Pancreas (tissue), 10 donors: ENCODE measurements at regions of chr5 and their contacts with region 1.

Region 1: DNA sequence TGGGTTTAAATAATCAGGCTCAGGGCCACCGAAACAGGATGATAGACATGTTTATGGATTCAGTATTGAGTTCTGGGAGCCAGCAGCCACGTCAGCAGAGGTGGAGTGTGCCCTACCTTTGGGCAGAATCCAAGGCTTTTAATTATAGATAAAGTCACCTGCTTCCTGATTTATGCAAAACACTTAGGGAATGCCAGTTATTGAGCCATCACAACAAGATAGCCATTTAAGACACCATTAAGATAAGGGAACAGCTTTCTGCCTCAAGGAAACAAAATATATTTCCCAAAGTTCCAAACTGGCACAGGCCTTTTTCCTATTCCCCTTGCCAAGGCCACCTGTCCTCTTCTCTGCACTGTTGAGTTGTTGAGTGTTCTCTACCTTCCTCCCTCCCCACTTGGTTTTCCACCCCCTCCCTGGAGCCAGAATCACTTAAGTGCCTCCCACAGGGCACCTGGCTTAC is 2.4 kb downstream of the CCL28 start:
- DNase-seq: peak; percentile 60 to 90 (median 78)
- ATAC-seq: peak; percentile 86 to 91 (median 86)
- H3K4me3 ChIP-seq: peak overlapping the region in 1 of 4 donors; percentile 25
- H3K27ac ChIP-seq: peak overlapping the region; percentile 38 to 84 (median 68)
- H3K4me1 ChIP-seq: peaks cover 21 to 32% (median 22%) of the 10 kb centered on the region in 3 donors
- H3K27me3 ChIP-seq: no peaks in the 10 kb centered on the region
- CTCF ChIP-seq: no peak

Region 2: DNA sequence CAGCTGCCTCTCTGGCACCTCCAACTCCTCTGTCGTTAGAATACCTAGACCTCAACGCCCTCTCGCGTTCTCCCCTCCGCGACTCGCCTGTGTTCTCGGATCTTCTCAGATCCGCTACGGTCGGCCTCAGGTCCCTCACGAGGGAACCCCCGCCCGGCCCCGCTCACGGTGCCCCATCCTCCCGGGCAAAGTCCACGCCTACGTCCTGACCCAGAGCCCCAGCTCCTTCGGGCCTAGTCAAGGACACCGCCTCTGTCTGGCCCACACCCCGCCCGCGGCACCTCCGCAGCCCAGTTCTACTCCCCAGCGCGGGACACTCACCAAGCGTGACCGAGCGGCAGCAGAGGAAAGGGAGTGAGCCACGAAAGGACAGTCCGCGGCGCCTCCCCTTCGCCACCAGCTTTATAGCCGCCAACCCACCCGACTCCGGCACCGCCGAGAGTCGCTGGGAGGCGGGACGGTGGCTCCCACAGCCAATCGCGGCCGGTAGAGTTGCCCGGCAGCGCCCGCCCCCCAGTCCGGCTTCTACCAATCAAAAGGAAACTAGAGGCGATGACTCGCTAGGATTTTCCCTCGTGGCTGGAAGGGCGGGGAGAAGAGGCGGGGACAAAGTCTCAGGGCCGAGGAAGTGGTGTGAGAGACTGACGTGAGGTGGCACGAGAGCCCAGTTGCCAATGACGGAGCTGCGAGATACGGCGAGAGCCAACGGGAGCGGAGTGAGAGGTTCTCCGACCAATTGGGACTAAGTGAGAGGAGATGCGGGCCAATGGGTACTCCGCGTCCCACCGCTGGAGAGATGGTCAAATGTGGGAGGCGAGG is 96.6 kb before region 1 on chr5 and contains the start of gene HMGCS1:
- intact Hi-C with region 1: no loop called
- DNase-seq: peak; percentile 92 to 99 (median 98)
- ATAC-seq: peak; percentile 94 to 98 (median 96)
- H3K4me3 ChIP-seq: peak within 1 kb of the TSS; percentile 55 to 82 (median 70)
- H3K27ac ChIP-seq: peak within 1 kb of the TSS; percentile 81 to 92 (median 88)
- H3K4me1 ChIP-seq: peaks cover 16 to 30% (median 16%) of the 10 kb centered on the region in 3 donors
- H3K27me3 ChIP-seq: no peaks in the 10 kb centered on the region
- CTCF ChIP-seq: no peak
- total RNA-seq, gene HMGCS1: 13.3 to 33.1 (median 22.1) TPM

Region 3: DNA sequence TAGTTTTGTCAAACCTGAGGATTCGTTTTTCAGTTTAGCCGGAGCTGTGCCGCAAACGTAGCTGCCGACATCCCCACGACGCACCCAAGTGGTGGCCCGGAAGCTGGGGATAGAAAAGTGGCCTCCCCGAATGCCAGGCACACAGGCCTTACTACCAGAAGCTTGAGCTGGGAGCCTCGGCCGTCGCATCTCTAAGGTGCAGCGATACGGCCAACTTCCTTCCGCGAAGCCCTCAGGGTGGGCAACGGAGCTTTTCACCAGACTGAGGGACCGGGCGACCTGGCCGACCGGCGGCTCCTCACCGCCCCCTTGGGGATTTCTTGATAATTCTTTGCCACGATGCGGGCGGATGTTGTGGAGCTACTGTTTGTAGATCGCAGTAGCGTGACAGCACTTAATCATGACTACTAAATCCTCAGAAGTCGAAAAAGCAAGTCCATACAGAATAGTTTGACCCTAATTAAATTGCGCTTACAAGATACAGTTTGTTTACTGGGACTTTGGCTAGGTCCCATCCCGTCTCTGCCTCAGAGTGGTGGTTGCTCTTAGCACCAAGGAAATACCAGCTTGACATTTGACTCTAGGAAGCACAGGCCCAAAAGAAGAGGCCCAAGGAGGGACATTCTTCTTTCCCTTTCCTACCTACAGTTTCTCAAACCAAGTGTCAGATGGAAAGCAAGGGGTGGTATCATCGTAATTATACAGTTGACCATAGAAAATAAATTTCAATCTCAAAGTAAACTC is 74.4 kb after region 1 on chr5:
- intact Hi-C with region 1: loop called in 1 of 3 experiments (anchors 5 kb)
- DNase-seq: peak; percentile 79 to 90 (median 86)
- ATAC-seq: peak; percentile 87 to 93 (median 88)
- H3K4me3 ChIP-seq: peak overlapping the region; percentile 86 to 93 (median 92)
- H3K27ac ChIP-seq: peak overlapping the region; percentile 91 to 99 (median 96)
- H3K4me1 ChIP-seq: peaks cover 0 to 11% (median 0%) of the 10 kb centered on the region in 3 donors
- H3K27me3 ChIP-seq: no peaks in the 10 kb centered on the region
- CTCF ChIP-seq: peak in 3 of 4 donors; percentile 34 to 66 (median 51)